Activated CD4-positive, alpha-beta memory T cell treated with anti-CD3 and anti-CD28 coated beads, Interleukin-2, amount 10 ng/mL, durations not matched to agents 7 days and 5 days (primary cell): ENCODE measurements at regions of chr9 and their contacts with region 1.

Region 1: GRCh38 chr9:99906403-99907207 is at the start of gene STX17:
- DNase-seq: peak; percentile 79
- H3K4me3 Mint-ChIP-seq: peak within 1 kb of the TSS; percentile 97
- H3K27ac Mint-ChIP-seq: peak within 1 kb of the TSS; percentile 96
- H3K4me1 Mint-ChIP-seq: peaks cover 31% of the 10 kb centered on the region
- H3K27me3 Mint-ChIP-seq: peaks cover 15% of the 10 kb centered on the region
- total RNA-seq, gene STX17: 35.8 to 37.3 TPM

Region 2: GRCh38 chr9:99868845-99869244 is 37.8 kb before region 1 on chr9:
- CTCF ChIA-PET with region 1: no interaction called
- POLR2A ChIA-PET with region 1: interaction called, 17 read pairs
- DNase-seq: peak; percentile 35
- H3K4me3 Mint-ChIP-seq: peak overlapping the region; percentile 4
- H3K27ac Mint-ChIP-seq: peak overlapping the region; percentile 59
- H3K4me1 Mint-ChIP-seq: peaks cover 41% of the 10 kb centered on the region
- H3K27me3 Mint-ChIP-seq: no peaks in the 10 kb centered on the region

Region 3: DNA sequence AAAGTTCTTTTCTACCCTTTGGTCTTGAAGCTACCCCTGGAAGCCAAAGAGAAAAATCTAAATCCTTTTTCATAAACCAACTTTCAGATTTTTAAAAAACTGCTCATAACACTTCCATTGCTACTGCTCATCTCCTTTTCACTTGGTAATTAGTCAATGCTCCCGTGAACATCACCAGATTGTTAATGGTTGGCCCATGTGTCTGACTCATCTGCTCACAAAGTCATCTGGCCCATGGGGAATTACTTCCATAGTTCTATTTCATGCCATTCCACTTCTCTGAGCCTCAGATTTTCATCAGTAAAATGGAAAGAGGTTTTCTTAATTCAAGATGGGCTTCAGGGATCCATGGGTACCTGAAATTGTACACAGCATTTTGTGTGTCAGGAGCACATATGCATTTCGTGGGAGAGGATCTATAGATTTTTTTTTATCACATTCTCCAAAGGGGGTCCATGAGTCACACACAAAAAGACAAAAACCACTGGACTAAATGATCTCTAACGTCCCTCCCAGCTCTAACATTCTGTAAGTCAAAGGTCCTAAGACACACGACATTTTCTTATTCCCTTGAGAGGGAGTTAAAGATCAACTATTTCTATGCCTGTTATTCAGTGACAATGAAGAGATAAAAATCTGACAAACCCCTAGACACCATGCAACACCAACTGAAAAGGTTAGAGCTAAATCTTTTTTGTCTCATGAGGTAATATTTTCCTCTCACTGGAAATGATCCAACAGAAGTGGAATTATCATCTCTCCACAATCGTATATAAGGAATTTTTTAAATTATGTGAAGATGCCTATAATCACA is 370.8 kb after region 1 on chr9:
- CTCF ChIA-PET with region 1: no interaction called
- POLR2A ChIA-PET with region 1: no interaction called
- DNase-seq: no peak
- H3K4me3 Mint-ChIP-seq: no peak overlapping the region
- H3K27ac Mint-ChIP-seq: no peak overlapping the region
- H3K4me1 Mint-ChIP-seq: no peaks in the 10 kb centered on the region
- H3K27me3 Mint-ChIP-seq: no peaks in the 10 kb centered on the region